PC-3 (cell line): ENCODE measurements at regions of chr12 and their contacts with region 1.

Region 1: DNA sequence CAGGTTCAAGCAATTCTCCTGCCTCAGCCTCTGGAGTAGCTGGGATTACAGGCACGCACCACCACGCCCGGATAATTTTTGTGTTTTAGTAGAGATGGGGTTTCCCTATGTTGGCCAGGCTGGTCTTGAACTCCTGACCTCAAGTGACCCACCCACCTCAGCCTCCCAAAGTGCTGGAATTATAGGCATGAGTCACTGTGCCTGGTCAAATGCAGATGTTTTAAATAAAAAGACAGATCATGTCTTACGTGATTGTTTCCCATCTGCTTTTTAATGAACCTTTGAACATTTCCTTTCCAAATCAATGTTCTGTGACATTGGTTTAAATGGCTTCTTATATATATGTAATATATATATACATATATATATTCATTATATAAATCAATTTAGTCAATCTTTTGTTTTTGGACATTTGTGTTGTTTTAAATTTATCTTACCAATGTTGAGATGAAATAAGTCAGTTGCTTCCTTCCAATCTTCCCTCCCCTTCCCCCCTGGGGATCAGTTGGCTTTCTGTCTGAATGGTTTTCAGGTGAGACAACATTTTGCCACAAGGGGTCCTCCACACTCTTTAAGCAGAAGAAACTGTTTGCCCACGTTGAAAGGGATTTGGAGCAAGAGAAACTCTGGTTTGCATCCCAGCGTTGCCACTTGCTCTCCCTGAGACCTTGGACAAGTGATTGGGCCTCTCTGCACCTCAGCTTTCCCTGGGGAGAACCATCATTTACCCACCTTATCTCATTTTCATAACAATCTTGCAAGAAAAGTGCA is 47.6 kb upstream of the RBM19 start:
- DNase-seq: peak; percentile 57
- ATAC-seq: peak; percentile 37; the same call in 1 of the 2 replicates
- H3K4me3 ChIP-seq: no peak overlapping the region
- H3K27ac ChIP-seq: no peak overlapping the region
- H3K4me1 ChIP-seq: peaks cover under 1% of the 10 kb centered on the region; the same call in 1 of the 2 replicates
- H3K27me3 ChIP-seq: peaks cover 33% of the 10 kb centered on the region
- CTCF ChIP-seq: peak; percentile 73

Region 2: GRCh38 chr12:113712481-113712880 is 301.3 kb before region 1 on chr12:
- CTCF ChIA-PET with region 1: no interaction called
- POLR2A ChIA-PET with region 1: no interaction called
- intact Hi-C with region 1: no loop called
- DNase-seq: no peak
- ATAC-seq: no peak
- H3K4me3 ChIP-seq: no peak overlapping the region
- H3K27ac ChIP-seq: no peak overlapping the region
- H3K4me1 ChIP-seq: no peaks in the 10 kb centered on the region
- H3K27me3 ChIP-seq: peaks cover 10% of the 10 kb centered on the region; the same call in 1 of the 2 replicates
- CTCF ChIP-seq: no peak

Region 3: DNA sequence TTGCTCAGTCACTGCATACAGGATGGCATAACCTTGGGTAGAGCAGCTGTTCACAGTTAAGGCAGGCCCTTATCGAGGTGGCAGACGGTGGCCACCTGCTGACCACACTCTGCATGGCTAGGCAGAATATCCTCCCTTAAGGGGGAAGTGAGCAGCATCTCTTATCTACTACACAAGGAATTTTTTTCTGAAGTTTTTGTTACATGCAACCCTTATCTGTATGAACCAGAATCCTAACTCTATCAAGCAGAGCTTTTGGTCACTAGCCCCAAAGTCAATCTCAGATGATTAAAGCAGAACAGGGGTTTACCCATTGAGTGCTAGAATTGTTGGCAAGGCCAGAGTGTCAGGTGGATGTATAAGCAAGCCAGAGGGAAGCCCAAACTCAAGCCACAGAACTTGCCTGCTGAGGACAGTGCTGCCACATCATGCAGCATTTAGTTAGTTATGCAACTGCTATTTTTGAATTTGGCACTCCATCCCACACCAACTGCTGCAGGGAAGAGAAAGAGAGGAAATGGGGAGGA is 199.4 kb after region 1 on chr12:
- CTCF ChIA-PET with region 1: no interaction called
- POLR2A ChIA-PET with region 1: no interaction called
- intact Hi-C with region 1: loop called (anchors 10 kb)
- DNase-seq: peak; percentile 18
- ATAC-seq: peak; percentile 58; the same call in 1 of the 2 replicates
- H3K4me3 ChIP-seq: no peak overlapping the region
- H3K27ac ChIP-seq: no peak overlapping the region
- H3K4me1 ChIP-seq: no peaks in the 10 kb centered on the region
- H3K27me3 ChIP-seq: peaks cover 35% of the 10 kb centered on the region
- CTCF ChIP-seq: peak; percentile 43

Region 4: DNA sequence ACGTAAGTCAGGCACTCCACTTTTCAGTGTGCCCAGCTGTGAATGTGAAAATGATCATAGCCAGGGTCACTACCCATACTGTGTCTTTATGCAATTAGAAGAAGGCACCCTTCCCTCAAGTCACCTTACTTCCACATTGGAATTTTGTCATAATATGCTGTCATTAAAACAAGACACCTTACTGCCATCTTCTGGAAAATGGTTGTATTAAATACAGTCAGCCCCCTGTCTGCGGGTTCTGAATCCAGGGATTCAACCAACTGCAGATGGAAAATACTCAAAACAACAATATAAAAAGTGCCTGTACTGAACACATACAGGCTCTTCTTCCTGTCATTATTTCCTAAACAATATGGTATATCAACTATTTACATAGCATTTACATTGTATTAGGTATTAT is 462.4 kb after region 1 on chr12:
- CTCF ChIA-PET with region 1: no interaction called
- POLR2A ChIA-PET with region 1: no interaction called
- intact Hi-C with region 1: loop called (anchors 1 kb)
- DNase-seq: peak; percentile 62
- ATAC-seq: peak; percentile 70
- H3K4me3 ChIP-seq: no peak overlapping the region
- H3K27ac ChIP-seq: no peak overlapping the region
- H3K4me1 ChIP-seq: no peaks in the 10 kb centered on the region
- H3K27me3 ChIP-seq: peaks cover 84% of the 10 kb centered on the region
- CTCF ChIP-seq: peak; percentile 74